ENCODE measurements at regions of chr4 and their contacts with region 1.

Region 1: DNA sequence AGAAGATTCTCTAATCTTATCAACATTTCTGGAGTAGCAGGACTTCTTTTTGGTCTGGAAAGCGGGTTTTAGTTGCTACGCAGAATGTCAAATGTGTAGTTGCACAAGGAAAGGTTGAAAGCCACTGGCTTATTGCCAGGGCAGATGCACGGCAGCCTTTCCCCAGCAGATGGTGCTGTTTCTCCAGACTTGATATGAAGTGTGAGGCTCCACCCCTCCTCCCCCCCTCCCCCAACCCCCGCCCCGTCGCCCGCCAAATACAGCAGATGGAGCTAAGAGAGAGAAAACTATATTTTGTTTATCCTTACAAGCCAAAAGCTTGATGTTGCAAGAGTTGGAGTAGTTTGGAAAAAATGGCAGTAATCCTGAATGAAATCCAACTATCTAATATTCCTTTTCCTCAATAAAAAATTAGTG is 32.0 kb downstream of the ENOPH1 start:
- DNase-seq: peak; percentile 78 to 94 (median 92)
- ATAC-seq: peak; percentile 86 to 89
- H3K4me3 ChIP-seq: no peak overlapping the region
- H3K27ac ChIP-seq: no peak overlapping the region
- H3K4me1 ChIP-seq: no peaks in the 10 kb centered on the region
- H3K27me3 ChIP-seq: no peaks in the 10 kb centered on the region

Region 2: GRCh38 chr4:82739316-82740179 is 277.1 kb after region 1 on chr4:
- intact Hi-C with region 1: loop called in 3 of 4 experiments (anchors 5 to 10 kb)
- DNase-seq: peak; percentile 51 to 88 (median 87)
- ATAC-seq: peak; percentile 91 to 94
- H3K4me3 ChIP-seq: no peak overlapping the region
- H3K27ac ChIP-seq: no peak overlapping the region
- H3K4me1 ChIP-seq: no peaks in the 10 kb centered on the region
- H3K27me3 ChIP-seq: no peaks in the 10 kb centered on the region

Region 3: GRCh38 chr4:83252782-83253405 is 790.5 kb after region 1 on chr4:
- intact Hi-C with region 1: loop called in 1 of 4 experiments (anchors 10 kb)
- DNase-seq: peak; percentile 49 to 69 (median 60)
- ATAC-seq: peak; percentile 62 to 76
- H3K4me3 ChIP-seq: no peak overlapping the region
- H3K27ac ChIP-seq: no peak overlapping the region
- H3K4me1 ChIP-seq: no peaks in the 10 kb centered on the region
- H3K27me3 ChIP-seq: no peaks in the 10 kb centered on the region

Region 4: DNA sequence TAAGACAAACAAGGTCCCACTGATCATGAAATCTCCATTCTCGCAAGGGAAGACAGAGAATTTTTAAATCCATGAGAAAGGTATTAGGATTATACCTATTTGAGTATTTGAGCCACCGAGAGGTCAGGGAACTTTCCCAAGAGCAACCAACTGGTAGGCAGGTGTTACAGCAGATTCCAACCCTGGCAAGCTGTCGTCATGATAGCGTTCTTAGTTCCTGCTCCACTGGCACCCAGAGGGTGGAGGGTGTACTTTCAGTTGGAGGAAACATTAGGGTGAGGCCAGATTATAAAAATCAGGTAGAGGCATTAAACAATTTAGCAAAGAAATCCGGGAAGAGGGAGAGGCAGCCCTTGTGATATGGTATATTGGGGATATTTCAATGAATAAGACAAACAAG is 798.9 kb after region 1 on chr4:
- intact Hi-C with region 1: loop called (anchors 5 to 10 kb)
- DNase-seq: no peak
- ATAC-seq: no peak
- H3K4me3 ChIP-seq: no peak overlapping the region
- H3K27ac ChIP-seq: no peak overlapping the region
- H3K4me1 ChIP-seq: peaks cover 2% of the 10 kb centered on the region
- H3K27me3 ChIP-seq: no peaks in the 10 kb centered on the region

Region 5: DNA sequence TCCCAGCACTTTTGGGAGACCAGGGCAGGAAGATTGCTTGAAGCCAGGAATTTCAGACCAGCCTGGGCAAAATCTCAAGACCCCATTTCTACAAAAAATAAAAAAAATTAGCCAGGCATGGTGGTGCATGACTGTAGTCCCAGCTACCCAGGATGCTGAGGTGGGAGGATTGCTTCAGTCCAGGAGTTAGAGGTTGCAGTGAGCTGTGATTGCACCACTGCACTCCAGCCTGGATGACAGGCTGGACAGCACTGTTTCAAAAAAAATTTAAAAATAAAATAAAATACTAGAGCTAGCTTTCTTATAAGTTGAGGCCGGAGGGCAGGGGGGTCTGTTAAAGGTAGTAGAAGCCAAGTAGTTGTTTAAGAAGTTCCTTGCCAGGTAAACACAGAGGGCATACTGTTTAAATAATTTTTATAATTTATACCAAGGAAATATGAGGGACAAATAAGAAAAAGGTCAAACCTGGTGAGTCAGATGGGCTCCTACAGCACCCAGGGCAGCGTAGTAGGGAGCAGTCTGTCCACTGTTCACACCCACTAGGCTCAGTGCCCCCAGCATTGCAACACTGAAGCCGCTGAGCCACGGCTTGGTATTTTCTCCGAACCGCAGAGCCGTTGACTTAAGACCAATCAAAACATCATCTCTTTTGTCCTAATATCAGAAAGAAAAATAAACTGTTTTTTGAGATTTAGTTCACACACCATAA is 804.9 kb after region 1 on chr4:
- intact Hi-C with region 1: loop called in 3 of 4 experiments (anchors 5 to 10 kb)
- DNase-seq: peak in 1 of 3 donors; percentile 38
- ATAC-seq: peak; percentile 29 to 69
- H3K4me3 ChIP-seq: no peak overlapping the region
- H3K27ac ChIP-seq: no peak overlapping the region
- H3K4me1 ChIP-seq: no peaks in the 10 kb centered on the region
- H3K27me3 ChIP-seq: no peaks in the 10 kb centered on the region